WTC11 (cell line): ENCODE measurements at regions of chr6 and their contacts with region 1.

Region 1: DNA sequence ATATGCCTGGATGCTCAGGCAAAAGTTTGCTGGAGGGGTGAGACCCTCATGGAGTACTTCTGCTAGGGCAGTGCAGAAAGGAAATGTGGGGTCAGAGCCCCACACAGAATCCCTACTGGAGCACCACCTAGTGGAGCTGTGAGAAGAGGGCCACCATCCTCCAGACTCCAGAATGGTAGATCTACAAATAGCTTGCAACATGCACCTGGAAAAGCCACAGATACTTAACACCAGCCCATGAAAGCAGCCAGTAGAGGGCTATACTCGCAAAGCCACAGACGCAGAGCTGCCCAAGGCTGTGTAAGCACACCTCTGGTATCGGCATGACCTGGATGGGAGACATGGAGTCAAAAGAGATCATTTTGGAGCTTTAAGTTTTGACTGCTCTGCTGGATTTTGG is 60.7 kb upstream of the GJE1 start:
- DNase-seq: peak; percentile 46
- ATAC-seq: peak; percentile 100
- H3K4me3 Mint-ChIP-seq: no peak overlapping the region
- H3K27ac Mint-ChIP-seq: no peak overlapping the region
- H3K4me1 Mint-ChIP-seq: peaks cover 6% of the 10 kb centered on the region
- H3K27me3 Mint-ChIP-seq: no peaks in the 10 kb centered on the region
- CTCF ChIP-seq: no peak

Region 2: GRCh38 chr6:141988954-141989705 is 82.9 kb before region 1 on chr6:
- CTCF ChIA-PET with region 1: interaction called, 47 read pairs
- POLR2A ChIA-PET with region 1: no interaction called
- DNase-seq: peak; percentile 45
- ATAC-seq: peak; percentile 85
- H3K4me3 Mint-ChIP-seq: no peak overlapping the region
- H3K27ac Mint-ChIP-seq: no peak overlapping the region; the same call in 1 of the 2 replicates
- H3K4me1 Mint-ChIP-seq: peaks cover 37% of the 10 kb centered on the region
- H3K27me3 Mint-ChIP-seq: no peaks in the 10 kb centered on the region
- CTCF ChIP-seq: peak; percentile 79

Region 3: DNA sequence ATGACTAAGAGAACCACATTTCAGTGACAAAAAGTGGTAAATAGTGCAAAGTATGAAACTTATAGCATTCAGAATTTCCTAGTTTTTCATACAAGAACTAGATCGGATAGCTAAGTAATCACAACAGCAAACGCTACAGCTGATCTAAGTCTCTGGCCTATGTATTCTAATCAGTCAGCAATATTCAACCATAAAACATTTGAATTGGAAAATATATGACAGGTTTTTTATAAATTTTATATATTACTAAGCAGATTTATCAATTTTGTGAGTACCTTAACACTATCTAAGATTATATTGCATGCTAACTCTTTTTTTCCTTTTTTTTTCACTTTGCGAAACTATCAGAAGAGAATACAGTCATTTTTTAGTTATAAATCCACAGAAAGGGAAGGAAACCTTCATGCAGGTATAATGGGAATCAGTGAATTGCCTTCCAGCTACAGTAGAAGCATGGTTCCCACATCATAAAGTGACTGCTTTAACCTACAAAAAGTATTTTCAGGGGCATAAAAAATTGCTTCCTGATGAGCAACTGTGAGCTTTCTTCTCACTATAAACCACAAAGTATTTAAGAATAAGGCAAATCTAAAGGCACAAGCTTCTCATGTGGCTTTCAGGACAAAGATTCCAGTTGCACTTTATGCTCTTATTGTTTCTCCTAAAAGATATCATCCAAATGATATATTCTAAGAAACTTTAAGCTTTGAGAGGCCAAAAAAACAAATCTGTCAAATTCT is 13.3 kb before region 1 on chr6:
- CTCF ChIA-PET with region 1: interaction called, 12 read pairs
- POLR2A ChIA-PET with region 1: no interaction called
- DNase-seq: no peak
- ATAC-seq: no peak
- H3K4me3 Mint-ChIP-seq: no peak overlapping the region
- H3K27ac Mint-ChIP-seq: no peak overlapping the region
- H3K4me1 Mint-ChIP-seq: peaks cover 6% of the 10 kb centered on the region
- H3K27me3 Mint-ChIP-seq: no peaks in the 10 kb centered on the region
- CTCF ChIP-seq: no peak

Region 4: DNA sequence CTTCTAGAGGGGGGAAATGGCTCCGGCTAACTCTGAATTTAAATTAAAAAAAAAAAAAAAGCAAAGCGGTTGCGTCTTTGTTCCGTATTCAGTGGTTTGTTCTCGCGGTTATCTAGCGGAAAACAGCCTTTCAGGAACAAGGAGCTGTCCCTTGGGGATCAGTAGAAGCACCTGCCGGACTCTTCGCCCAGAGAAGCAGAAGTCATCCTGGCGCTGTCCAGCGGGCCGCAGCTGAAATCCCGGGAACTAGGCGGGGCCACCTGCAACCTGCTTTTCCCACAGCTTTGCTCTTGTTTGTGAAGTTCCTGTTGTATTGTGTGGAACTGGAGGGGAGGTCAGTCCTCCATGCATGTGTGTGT is 16.9 kb after region 1 on chr6:
- CTCF ChIA-PET with region 1: interaction called, 17 read pairs
- POLR2A ChIA-PET with region 1: no interaction called
- DNase-seq: peak; percentile 84
- ATAC-seq: peak; percentile 96
- H3K4me3 Mint-ChIP-seq: peak overlapping the region; percentile 79
- H3K27ac Mint-ChIP-seq: no peak overlapping the region
- H3K4me1 Mint-ChIP-seq: peaks cover 7% of the 10 kb centered on the region
- H3K27me3 Mint-ChIP-seq: peaks cover 25% of the 10 kb centered on the region
- CTCF ChIP-seq: no peak